ENCODE measurements at regions of chr3 and their contacts with region 1.

Region 1: GRCh38 chr3:152416808-152417580 is 148.3 kb downstream of the MBNL1 start:
- DNase-seq: no peak
- H3K4me3 ChIP-seq: no peak overlapping the region
- H3K4me3 Mint-ChIP-seq: peak overlapping the region in 1 of 7 donors; percentile 12
- H3K27ac ChIP-seq: no peak overlapping the region
- H3K27ac Mint-ChIP-seq: peak overlapping the region; percentile 5 to 77 (median 26)
- H3K4me1 ChIP-seq: peaks cover 29% of the 10 kb centered on the region
- H3K4me1 Mint-ChIP-seq: peaks cover 74 to 91% (median 90%) of the 10 kb centered on the region in 3 donors
- H3K27me3 ChIP-seq: no peaks in the 10 kb centered on the region
- H3K27me3 Mint-ChIP-seq: no peaks in the 10 kb centered on the region

Region 2: GRCh38 chr3:152281133-152281713 is 135.8 kb before region 1 on chr3:
- CTCF ChIA-PET with region 1: no interaction called
- POLR2A ChIA-PET with region 1: interaction called, 10 read pairs
- DNase-seq: no peak
- H3K4me3 ChIP-seq: peak overlapping the region; percentile 30
- H3K4me3 Mint-ChIP-seq: peak overlapping the region; percentile 28 to 77 (median 66)
- H3K27ac ChIP-seq: no peak overlapping the region
- H3K27ac Mint-ChIP-seq: peak overlapping the region; percentile 60 to 96 (median 82)
- H3K4me1 ChIP-seq: peaks cover 92% of the 10 kb centered on the region
- H3K4me1 Mint-ChIP-seq: peaks cover 76 to 97% (median 93%) of the 10 kb centered on the region in 3 donors
- H3K27me3 ChIP-seq: no peaks in the 10 kb centered on the region
- H3K27me3 Mint-ChIP-seq: no peaks in the 10 kb centered on the region

Measured in CD8-positive, alpha-beta memory T cell (primary cell).